Activated CD4-positive, alpha-beta memory T cell treated with anti-CD3 and anti-CD28 coated beads for 36 hours (primary cell): ENCODE measurements at regions of chr7 and their contacts with region 1.

Region 1: DNA sequence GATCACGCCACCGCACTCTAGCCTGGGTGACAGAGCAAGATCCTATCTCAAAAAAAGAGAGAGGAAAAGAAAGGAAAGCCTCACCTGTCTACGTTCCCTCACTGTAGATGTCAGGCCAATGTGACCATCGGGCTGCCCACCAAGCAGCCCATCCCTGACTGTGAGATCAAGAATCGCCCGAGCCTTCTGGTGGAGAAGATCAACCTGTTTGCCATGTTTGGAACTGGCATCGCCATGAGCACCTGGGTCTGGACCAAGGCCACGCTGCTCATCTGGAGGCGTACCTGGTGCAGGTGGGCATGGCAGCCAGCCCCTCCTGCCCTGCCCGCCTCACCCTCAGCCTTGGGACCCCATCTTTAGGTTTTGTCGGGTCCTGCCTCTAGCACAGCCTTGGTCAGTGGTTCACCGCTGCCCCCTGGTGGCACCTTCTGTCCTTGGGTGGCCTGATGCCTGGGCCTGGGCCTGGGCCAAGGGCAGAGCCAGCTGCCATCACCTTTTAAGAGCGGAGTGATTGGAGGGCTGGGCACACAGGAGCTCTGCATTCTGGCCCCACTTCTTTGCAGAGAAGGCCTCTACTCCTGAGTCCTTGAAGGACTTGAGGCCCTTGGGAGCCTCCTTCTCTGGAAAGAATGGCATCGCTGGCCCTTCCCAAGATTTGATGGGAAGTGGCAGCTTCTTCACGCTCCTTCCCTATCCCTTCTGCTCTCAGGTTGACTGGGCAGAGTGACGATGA is 14.4 kb upstream of the AHCYL2 start:
- DNase-seq: peak; percentile 82
- H3K4me3 Mint-ChIP-seq: no peak overlapping the region
- H3K27ac Mint-ChIP-seq: no peak overlapping the region
- H3K4me1 Mint-ChIP-seq: no peaks in the 10 kb centered on the region
- H3K27me3 Mint-ChIP-seq: peaks cover 4% of the 10 kb centered on the region

Region 2: GRCh38 chr7:128904381-128905197 is 305.8 kb before region 1 on chr7:
- CTCF ChIA-PET with region 1: no interaction called
- POLR2A ChIA-PET with region 1: no interaction called
- intact Hi-C with region 1: loop called (anchors 5 kb)
- DNase-seq: no peak
- H3K4me3 Mint-ChIP-seq: no peak overlapping the region
- H3K27ac Mint-ChIP-seq: no peak overlapping the region
- H3K4me1 Mint-ChIP-seq: no peaks in the 10 kb centered on the region
- H3K27me3 Mint-ChIP-seq: peaks cover 21% of the 10 kb centered on the region

Region 3: DNA sequence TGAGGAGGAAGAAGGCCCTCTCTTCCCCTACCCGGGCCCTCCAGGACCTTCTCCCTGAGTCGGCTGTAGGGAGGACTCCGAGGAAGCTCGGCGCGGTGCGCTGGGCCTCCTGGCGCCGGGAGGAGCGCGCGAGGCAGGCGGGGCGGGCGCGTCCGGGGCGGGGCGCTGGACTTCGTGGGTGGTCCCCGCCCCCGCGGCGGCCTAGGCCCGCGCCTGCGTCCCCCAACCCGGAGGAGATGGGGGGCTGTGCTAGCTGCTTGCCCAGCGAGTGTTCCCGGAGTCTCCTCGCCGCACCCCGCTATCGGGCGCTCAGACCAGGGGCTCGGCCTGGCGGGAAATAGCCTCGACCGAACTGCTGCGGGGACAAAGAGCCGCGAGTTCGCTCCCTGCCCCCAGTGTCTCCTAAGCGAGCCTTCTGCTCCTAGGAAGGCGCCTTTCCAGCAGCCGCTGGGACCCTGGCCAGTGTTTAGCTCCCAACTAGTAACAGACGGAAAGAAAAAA is 41.2 kb before region 1 on chr7:
- CTCF ChIA-PET with region 1: interaction called, 66 read pairs
- POLR2A ChIA-PET with region 1: no interaction called
- intact Hi-C with region 1: loop called (anchors 1 kb)
- DNase-seq: peak; percentile 40
- H3K4me3 Mint-ChIP-seq: peak overlapping the region; percentile 57
- H3K27ac Mint-ChIP-seq: no peak overlapping the region
- H3K4me1 Mint-ChIP-seq: peaks cover 11% of the 10 kb centered on the region
- H3K27me3 Mint-ChIP-seq: peaks cover 15% of the 10 kb centered on the region